Caco-2 (cell line): ENCODE measurements at regions of chr5 and their contacts with region 1.

Region 1: DNA sequence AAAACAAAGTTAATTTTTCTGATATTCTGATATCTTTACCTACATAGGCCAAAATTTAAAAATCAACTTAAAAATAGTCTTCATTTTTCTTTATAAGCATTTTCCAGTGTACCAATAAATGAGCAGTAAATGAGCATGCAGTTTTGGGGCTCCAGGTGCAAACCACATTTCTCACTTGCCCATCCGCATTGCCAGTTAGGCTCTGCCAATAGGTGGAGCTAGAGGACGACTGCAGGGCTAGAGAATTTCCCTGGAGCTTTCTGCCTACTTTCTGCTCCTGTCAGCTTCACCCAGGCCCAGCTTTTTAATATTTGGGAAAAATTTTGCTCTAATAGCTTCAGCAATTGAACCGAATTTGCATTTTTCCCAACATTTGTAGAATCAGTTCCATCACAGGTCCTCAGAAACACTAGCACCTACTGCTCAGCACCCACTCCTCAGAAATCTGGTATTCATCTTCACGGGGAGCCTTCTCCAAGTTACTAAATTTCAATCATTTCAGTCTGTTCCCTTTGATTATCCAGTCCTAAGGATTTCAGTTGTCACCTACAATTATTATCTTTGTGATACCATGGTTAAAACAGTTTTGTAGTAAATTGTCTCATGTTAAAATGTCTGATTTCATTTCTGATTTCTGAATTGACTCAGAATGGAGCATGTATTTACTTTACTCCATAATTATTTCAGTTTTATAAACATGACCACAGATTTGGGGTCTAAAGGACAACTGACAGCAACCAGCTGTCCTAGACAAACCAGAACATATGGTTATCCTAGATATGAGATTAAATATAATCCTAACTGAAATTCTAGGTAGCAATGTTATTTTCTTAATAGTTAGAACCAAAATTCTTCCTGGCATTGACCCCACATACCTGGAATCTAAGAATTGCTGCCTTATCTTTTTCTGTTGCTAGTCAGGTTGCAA is 104.6 kb upstream of the FAM174A start:
- DNase-seq: peak; percentile 42 to 63
- H3K4me3 ChIP-seq: no peak overlapping the region
- H3K4me3 Mint-ChIP-seq: no peak overlapping the region
- H3K27ac Mint-ChIP-seq: no peak overlapping the region
- H3K4me1 ChIP-seq: no peaks in the 10 kb centered on the region
- H3K4me1 Mint-ChIP-seq: no peaks in the 10 kb centered on the region
- H3K27me3 ChIP-seq: no peaks in the 10 kb centered on the region
- H3K27me3 Mint-ChIP-seq: no peaks in the 10 kb centered on the region
- CTCF ChIP-seq: peak; percentile 76 to 94

Region 2: DNA sequence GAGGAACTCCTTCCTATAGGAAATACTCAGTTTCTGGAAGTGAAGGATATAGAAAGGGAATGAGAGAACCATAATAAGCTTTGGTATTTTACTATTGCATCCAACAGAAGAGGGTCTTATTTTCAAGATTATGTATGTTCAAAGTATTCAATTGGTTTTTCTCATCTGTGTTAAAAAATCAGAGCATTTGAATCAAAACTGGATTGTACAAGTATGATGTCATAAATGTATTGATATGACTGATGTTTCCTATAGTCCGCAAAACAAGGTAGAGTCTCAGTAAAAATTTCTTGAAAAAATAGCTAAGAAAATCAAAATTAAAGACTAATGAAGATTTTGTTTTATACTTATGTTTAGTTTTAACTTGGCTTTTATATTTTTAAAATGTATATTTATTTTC is 217.0 kb before region 1 on chr5:
- CTCF ChIA-PET with region 1: no interaction called
- POLR2A ChIA-PET with region 1: no interaction called
- intact Hi-C with region 1: no loop called
- DNase-seq: no peak
- H3K4me3 ChIP-seq: no peak overlapping the region
- H3K4me3 Mint-ChIP-seq: no peak overlapping the region
- H3K27ac Mint-ChIP-seq: no peak overlapping the region
- H3K4me1 ChIP-seq: no peaks in the 10 kb centered on the region
- H3K4me1 Mint-ChIP-seq: no peaks in the 10 kb centered on the region
- H3K27me3 ChIP-seq: no peaks in the 10 kb centered on the region
- H3K27me3 Mint-ChIP-seq: no peaks in the 10 kb centered on the region
- CTCF ChIP-seq: no peak

Region 3: GRCh38 chr5:100520348-100520747 is 89.8 kb after region 1 on chr5:
- CTCF ChIA-PET with region 1: no interaction called
- POLR2A ChIA-PET with region 1: no interaction called
- intact Hi-C with region 1: loop called (anchors 1 kb)
- DNase-seq: no peak
- H3K4me3 ChIP-seq: no peak overlapping the region
- H3K4me3 Mint-ChIP-seq: no peak overlapping the region
- H3K27ac Mint-ChIP-seq: no peak overlapping the region
- H3K4me1 ChIP-seq: no peaks in the 10 kb centered on the region
- H3K4me1 Mint-ChIP-seq: no peaks in the 10 kb centered on the region
- H3K27me3 ChIP-seq: no peaks in the 10 kb centered on the region
- H3K27me3 Mint-ChIP-seq: peaks cover 6% of the 10 kb centered on the region
- CTCF ChIP-seq: peak in 1 of 2 experiments; percentile 9